ENCODE measurements at regions of chr5 and their contacts with region 1.

Region 1: GRCh38 chr5:62702126-62702525 is 123.5 kb downstream of the LRRC70 start:
- DNase-seq: no peak
- CTCF ChIP-seq: no peak

Region 2: GRCh38 chr5:62720031-62720441 is 17.9 kb after region 1 on chr5:
- CTCF ChIA-PET with region 1: interaction called, 10 read pairs
- POLR2A ChIA-PET with region 1: no interaction called
- DNase-seq: peak; percentile 37
- CTCF ChIP-seq: no peak

Region 3: DNA sequence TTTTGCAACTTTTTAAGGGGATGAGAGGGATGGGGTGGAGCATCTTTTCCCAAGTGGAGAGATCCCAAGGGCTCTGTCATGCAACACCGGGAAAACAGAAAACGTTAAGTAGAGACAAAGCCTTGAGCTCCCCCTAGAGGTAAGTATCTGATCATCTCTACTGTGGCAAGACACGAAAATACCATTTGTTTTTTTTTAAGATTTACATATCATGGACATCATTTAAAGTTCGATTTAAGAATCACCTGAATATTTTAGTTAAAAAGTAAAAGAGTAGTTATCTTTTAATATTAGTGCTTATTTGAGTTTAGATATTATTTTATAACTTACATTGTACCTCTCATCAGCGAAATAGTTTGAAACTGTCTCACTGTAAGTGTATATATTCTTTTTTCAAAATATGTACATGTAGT is 76.9 kb after region 1 on chr5:
- CTCF ChIA-PET with region 1: no interaction called
- POLR2A ChIA-PET with region 1: no interaction called
- DNase-seq: peak; percentile 62
- CTCF ChIP-seq: peak; percentile 53

Measured in GM10248 (cell line).